GM10248 (cell line): ENCODE measurements at regions of chr12 and their contacts with region 1.

Region 1: GRCh38 chr12:49088190-49088931 is 6.2 kb downstream of the DHH start:
- DNase-seq: peak; percentile 83
- CTCF ChIP-seq: peak; percentile 92

Region 2: DNA sequence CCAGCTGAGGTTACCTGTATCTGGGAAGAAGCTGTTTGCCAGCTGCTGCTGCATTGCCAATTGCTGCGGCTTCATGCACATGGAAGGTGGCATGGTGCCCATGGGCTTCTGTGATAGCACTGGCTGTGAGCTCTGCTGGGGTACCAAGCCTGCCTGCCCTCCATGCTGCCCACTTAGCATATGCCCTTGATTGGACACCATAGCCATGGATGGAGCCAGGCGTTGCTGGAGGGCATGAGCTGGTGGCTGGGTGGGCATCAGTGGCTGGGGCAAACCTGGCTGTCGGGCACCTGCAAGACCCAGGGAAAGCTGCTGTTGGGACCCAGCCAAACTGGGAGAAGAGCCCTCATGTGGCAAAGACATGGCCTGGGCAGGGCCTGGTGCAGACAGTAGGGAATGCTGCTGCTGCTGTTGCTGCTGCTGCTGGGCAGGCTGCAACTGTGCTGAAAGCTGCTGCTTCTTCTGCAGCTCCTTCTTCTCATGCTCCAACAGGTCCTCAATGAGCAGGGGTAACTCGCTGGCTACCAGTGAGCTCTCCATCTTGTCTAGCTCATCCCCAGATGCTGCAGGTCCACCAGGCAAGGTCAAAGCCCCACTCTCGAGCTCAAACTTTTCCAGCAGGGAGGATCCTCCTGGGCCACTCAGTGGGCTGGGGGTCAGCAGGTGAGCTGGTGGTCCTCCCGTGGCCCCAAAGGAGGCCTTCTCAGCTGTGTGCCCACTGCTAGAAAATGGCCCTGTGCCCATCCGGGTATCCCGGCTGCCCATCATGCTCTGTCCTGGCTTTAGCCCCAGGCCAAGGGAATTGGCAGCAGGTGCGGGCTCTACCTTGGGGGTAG is 51.0 kb before region 1 on chr12:
- CTCF ChIA-PET with region 1: interaction called, 13 read pairs
- POLR2A ChIA-PET with region 1: no interaction called
- DNase-seq: no peak
- CTCF ChIP-seq: no peak

Region 3: DNA sequence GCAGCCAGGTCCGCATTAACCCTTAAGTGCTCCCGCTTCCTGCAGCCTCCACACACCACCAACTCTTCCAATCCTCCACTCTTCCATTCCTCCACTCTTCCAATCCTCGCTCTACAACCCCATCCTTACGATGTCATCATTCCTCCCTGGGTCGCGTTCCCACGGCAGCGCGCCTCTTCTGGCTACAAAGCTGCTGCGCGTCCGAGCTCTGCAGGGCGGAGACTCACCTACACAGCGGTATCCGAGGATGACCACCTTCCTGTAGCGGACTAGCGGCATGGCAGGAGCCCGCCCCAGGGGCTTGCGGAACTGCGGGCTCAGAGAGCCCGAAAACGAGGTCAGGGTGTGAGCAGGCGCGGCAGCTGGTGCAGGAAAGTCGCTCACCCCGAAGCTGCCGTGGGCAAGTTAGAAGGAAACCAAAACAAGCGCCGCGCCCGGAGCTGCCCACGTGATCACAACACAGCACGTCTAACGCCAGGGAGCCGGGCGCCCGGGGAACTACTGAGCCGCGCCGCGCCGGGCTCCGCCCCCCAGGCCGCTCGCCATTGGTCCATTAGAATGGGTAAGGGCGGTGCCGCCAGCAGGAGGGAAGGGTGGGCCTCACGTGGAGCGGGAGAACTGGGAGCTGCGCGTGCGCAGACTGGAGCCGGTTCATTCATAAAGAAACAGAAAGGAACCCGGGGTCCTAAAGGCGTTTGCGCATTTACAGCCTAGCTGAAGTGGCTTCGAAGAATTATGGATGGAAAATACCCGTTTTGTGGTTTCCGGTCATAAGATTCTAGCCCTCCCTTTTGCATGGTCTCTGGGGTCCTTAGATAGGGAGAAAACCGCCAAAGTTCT is 18.6 kb before region 1 on chr12 and contains the start of gene RHEBL1:
- CTCF ChIA-PET with region 1: interaction called, 184 read pairs
- POLR2A ChIA-PET with region 1: no interaction called
- DNase-seq: peak; percentile 99
- CTCF ChIP-seq: peak; percentile 21

Region 4: GRCh38 chr12:49110464-49111155 is 22.2 kb after region 1 on chr12 and contains the start of gene LMBR1L:
- CTCF ChIA-PET with region 1: interaction called, 369 read pairs
- POLR2A ChIA-PET with region 1: interaction called, 3 read pairs
- DNase-seq: peak; percentile 99
- CTCF ChIP-seq: peak; percentile 9

Region 5: GRCh38 chr12:49121047-49121696 is 32.8 kb after region 1 on chr12:
- CTCF ChIA-PET with region 1: interaction called, 31 read pairs
- POLR2A ChIA-PET with region 1: no interaction called
- DNase-seq: peak; percentile 23
- CTCF ChIP-seq: peak; percentile 32

Region 6: GRCh38 chr12:49232940-49233841 is 144.8 kb after region 1 on chr12:
- CTCF ChIA-PET with region 1: interaction called, 14 read pairs
- POLR2A ChIA-PET with region 1: no interaction called
- DNase-seq: no peak
- CTCF ChIP-seq: no peak